ENCODE measurements at regions of chr2 and their contacts with region 1.

Region 1: DNA sequence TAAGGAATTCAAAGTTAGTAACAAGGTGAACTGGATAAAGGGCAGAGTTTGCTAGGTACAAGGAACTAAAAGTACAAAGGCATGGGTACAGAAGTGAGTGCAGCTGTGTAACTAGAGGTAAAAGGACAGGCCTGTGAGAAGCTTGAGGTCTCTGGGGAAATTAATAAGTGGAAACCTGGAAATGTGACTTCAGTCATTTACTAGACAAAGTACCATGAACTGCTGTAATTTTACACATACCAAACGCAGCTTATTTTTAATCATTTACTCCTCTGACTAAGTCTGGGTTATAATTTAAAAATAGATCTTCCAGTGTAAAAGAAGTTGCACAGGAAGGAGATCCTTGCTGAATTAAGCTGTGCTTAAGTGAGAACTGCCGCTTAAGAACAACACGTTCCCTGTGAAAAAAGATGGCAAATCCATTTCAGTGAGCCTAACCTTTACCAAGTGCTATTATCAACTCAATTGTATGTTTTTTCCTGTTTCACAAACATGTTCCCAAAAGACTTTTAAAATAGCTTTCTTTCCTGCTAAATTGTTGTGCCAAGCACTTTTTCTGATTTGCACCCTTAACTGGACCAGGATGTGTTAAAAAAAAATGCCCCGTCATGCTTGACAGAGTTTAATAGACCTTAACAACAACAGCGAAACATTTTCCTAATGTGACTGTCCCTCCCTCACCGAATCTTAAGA is 44.3 kb downstream of the CALCRL start:
- DNase-seq: no peak

Region 2: GRCh38 chr2:187136646-187137045 is 267.1 kb before region 1 on chr2:
- intact Hi-C with region 1: no loop called
- DNase-seq: no peak

Region 3: DNA sequence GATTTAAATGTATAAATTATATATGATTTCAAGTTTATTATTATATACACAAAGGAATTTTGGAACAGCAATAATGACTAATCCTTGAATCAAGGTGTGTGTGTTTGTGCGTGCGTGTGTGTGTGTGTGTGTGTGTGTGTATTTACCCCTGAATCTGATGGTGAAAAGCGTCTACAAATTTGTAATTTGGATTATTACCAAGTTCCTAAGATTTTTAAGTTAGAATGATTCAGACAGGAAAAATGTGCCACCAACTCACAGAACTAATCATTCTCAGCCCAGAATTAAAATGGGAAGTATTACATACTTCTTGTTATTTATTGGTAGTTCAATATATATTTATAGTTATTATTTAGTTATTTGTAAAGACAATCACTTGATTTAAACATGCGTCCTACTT is 32.0 kb after region 1 on chr2:
- intact Hi-C with region 1: loop called in 1 of 2 experiments (anchors 5 kb)
- DNase-seq: no peak

Measured in posterior vena cava (tissue), 2 donors.